CD8-positive, alpha-beta T cell (primary cell): ENCODE measurements at regions of chr20 and their contacts with region 1.

Region 1: DNA sequence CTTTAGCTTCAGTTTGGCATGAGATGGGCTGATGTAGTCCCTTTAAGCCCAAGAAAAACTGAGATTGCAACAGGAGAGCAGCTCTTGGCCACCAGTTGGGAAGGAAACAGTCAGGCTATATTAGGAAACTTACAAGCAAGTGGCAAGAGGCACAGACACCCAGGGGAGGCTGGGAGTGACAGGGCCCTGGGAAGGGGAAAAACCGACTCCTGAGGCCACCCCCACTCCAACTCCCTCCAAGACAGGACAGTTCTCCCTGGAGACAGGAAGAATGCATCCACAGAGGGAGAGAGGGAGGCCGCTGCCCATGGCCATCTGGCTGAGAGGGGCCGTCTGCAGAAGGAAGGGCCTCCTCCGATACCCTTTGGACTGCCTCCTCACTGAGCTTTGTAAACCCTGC is 20.5 kb downstream of the JPH2 start:
- DNase-seq: no peak
- ATAC-seq: no peak
- H3K4me3 ChIP-seq: no peak overlapping the region
- H3K4me3 Mint-ChIP-seq: no peak overlapping the region
- H3K27ac ChIP-seq: no peak overlapping the region
- H3K27ac Mint-ChIP-seq: no peak overlapping the region
- H3K4me1 ChIP-seq: no peaks in the 10 kb centered on the region
- H3K4me1 Mint-ChIP-seq: no peaks in the 10 kb centered on the region
- H3K27me3 ChIP-seq: no peaks in the 10 kb centered on the region
- H3K27me3 Mint-ChIP-seq: peaks cover 53% of the 10 kb centered on the region
- CTCF ChIP-seq: no peak

Region 2: DNA sequence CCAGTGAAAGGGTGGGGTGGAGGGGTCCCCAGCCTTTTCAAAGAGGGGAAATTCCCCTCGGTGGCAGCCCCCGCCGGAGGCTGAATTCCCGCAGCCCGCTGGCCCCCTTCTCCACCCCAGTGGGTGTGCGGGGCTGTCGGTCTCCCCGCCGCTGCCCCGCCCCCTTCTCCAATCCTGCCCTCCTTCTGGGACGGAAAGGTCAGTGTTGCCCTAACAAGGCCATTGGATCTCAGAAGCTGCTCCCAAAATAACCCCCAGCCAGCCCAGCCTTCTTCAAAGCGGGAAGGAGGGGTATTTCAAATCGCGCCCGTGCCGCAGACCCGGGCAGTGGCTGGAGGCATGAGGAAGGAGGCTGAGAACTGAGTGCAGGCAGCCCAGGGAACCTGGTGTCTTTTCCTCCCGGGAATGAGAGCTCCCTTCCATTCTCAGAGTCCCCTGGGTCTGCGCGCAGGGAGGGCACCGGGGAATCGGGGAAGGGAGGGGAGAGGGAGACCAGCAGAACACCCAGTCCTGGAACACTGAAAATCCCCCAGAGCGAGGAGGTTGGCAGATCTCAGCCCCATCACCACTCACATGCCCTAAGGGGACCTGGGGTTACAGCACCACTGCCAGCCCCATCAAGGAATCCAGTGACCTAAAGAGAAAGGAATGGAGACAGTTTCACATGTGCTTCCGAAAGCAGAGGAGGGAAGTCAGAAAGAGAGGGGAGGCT is 20.7 kb after region 1 on chr20 and contains the start of gene JPH2:
- CTCF ChIA-PET with region 1: interaction called, 15 read pairs
- POLR2A ChIA-PET with region 1: no interaction called
- intact Hi-C with region 1: no loop called
- DNase-seq: no peak
- ATAC-seq: peak; percentile 11
- H3K4me3 ChIP-seq: peak within 1 kb of the TSS in 1 of 2 experiments; percentile 29
- H3K4me3 Mint-ChIP-seq: peak within 1 kb of the TSS; percentile 16
- H3K27ac ChIP-seq: no peak within 1 kb of the TSS
- H3K27ac Mint-ChIP-seq: no peak within 1 kb of the TSS
- H3K4me1 ChIP-seq: peaks cover 16% of the 10 kb centered on the region
- H3K4me1 Mint-ChIP-seq: peaks cover 9% of the 10 kb centered on the region
- H3K27me3 ChIP-seq: peaks cover 19 to 23% of the 10 kb centered on the region in 2 experiments
- H3K27me3 Mint-ChIP-seq: peaks cover 49% of the 10 kb centered on the region
- CTCF ChIP-seq: no peak
- total RNA-seq, gene JPH2: not detected

Region 3: GRCh38 chr20:44664131-44664530 is 497.7 kb after region 1 on chr20:
- CTCF ChIA-PET with region 1: no interaction called
- POLR2A ChIA-PET with region 1: no interaction called
- intact Hi-C with region 1: no loop called
- DNase-seq: no peak
- ATAC-seq: no peak
- H3K4me3 ChIP-seq: no peak overlapping the region
- H3K4me3 Mint-ChIP-seq: no peak overlapping the region
- H3K27ac ChIP-seq: no peak overlapping the region
- H3K27ac Mint-ChIP-seq: no peak overlapping the region
- H3K4me1 ChIP-seq: peaks cover 10% of the 10 kb centered on the region
- H3K4me1 Mint-ChIP-seq: peaks cover 29% of the 10 kb centered on the region
- H3K27me3 ChIP-seq: no peaks in the 10 kb centered on the region
- H3K27me3 Mint-ChIP-seq: no peaks in the 10 kb centered on the region
- CTCF ChIP-seq: no peak